ENCODE measurements at regions of chr17 and their contacts with region 1.

Region 1: GRCh38 chr17:75749545-75750389 is 15.2 kb downstream of the GALK1 start:
- DNase-seq: peak; percentile 93
- ATAC-seq: peak; percentile 83

Region 2: DNA sequence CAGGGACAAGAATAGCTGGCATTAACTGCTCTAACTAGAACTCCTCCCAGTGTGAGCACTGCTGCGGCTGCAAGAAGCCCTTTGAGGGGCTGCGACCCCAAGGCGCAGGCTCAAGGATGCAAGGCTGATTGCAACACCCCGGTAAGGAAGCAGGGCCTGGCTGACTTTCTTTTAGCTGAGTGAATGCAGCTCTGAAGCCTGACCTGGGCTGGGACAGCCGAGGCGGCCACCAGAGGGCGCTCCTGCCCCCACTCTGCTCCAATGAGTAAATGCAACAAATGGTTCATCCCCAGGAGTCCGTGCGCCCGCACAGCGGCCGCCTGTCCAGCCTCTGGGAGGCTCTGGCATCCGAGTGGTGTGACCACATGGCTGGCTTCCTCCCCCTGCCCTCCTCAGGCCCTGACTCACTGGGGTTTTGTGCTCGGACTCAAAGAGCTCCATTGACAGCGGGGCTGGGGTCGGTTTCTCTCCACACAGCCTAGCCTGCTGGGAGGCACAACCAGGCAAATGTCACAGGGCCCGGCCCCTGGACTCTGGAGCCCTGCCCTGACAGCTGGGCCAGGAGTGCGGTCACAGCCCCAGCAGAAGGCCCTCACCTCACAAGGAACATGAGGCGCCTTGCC is 116.8 kb before region 1 on chr17 and contains the start of gene SMIM5:
- intact Hi-C with region 1: loop called (anchors 5 kb)
- DNase-seq: peak; percentile 93
- ATAC-seq: peak; percentile 73
- total RNA-seq, gene SMIM5: 12.5 TPM

Region 3: GRCh38 chr17:75679706-75680442 is 69.9 kb before region 1 on chr17:
- intact Hi-C with region 1: loop called (anchors 2 kb)
- DNase-seq: no peak
- ATAC-seq: peak; percentile 67

Region 4: GRCh38 chr17:75785016-75785890 is 35.5 kb after region 1 on chr17:
- intact Hi-C with region 1: no loop called
- DNase-seq: peak; percentile 93
- ATAC-seq: peak; percentile 93

Region 5: DNA sequence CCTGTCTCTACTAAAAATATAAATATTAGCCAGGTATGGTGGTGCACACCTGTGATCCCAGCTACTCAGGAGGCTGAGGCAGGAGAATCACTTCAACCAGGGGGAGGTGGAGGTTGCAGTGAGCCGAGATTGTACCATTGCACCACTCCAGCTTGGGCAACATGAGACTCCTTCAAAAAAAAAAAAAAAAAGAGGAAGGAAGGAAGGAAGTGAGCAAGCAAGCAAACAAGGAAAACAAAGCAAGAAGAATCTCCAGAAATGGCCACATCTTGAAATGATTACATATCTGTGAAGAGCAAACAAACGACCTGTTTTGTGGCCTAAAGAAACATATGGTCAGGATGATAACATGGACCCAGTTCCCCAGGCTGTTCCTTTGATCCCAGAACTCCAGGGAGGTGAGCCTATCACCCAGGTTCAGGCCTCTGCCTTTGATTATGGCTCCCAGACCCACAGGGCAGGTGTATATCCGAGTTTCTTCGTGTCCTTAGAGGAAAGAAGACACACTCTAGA is 220.3 kb after region 1 on chr17:
- intact Hi-C with region 1: no loop called
- DNase-seq: no peak
- ATAC-seq: peak; percentile 19